ENCODE measurements at regions of chr14 and their contacts with region 1.

Region 1: DNA sequence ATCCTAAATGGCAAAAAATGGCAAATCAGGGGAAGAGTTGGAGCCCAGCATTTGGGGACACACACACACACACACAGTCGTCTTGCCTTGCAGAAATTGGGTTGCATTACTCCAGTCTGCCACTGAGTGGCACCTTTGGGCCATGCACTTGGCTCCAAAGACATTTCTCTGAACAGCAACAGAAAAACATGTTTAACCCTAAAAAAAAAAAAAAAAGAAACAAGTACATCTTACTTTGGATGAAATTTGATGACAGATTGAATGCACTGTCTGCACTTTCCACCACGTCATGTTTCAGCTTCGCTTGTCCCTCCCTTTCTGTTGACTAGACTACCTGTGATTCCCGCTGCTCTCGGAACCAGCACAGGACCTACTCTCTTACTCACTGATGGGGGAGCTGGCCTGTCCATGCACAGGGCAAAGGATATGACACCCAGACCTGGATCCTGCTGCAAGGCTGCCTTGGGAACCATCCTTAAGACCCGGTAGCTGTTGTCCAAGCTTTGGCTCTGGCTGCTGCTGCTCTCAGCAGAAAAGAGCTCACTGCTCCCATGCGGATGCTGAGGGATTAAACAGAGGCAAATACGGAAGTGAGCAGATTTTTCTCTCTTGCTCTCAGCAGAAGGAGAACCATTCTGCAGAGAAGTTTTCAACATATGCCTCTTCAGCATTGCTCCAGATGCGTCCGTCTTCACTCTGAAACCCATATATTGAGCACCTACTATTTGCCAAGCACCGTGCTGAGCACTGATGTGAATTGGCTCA is 376.8 kb downstream of the DPF3 start:
- DNase-seq: peak in 1 of 2 experiments; percentile 49
- H3K4me3 ChIP-seq: no peak overlapping the region
- H3K27ac ChIP-seq: no peak overlapping the region
- H3K4me1 ChIP-seq: no peaks in the 10 kb centered on the region
- H3K27me3 ChIP-seq: peaks cover 28% of the 10 kb centered on the region
- CTCF ChIP-seq: peak; percentile 80

Region 2: GRCh38 chr14:72554994-72555604 is 38.0 kb after region 1 on chr14:
- CTCF ChIA-PET with region 1: no interaction called
- POLR2A ChIA-PET with region 1: no interaction called
- intact Hi-C with region 1: no loop called
- DNase-seq: no peak
- H3K4me3 ChIP-seq: no peak overlapping the region
- H3K27ac ChIP-seq: no peak overlapping the region
- H3K4me1 ChIP-seq: no peaks in the 10 kb centered on the region
- H3K27me3 ChIP-seq: peaks cover 93% of the 10 kb centered on the region
- CTCF ChIP-seq: no peak

Region 3: GRCh38 chr14:72904840-72905561 is 387.9 kb after region 1 on chr14:
- CTCF ChIA-PET with region 1: interaction called, 4 read pairs
- POLR2A ChIA-PET with region 1: no interaction called
- intact Hi-C with region 1: loop called (anchors 1 kb)
- DNase-seq: peak; percentile 42 to 58
- H3K4me3 ChIP-seq: no peak overlapping the region
- H3K27ac ChIP-seq: no peak overlapping the region
- H3K4me1 ChIP-seq: no peaks in the 10 kb centered on the region
- H3K27me3 ChIP-seq: peaks cover 10% of the 10 kb centered on the region
- CTCF ChIP-seq: peak; percentile 96

Region 4: DNA sequence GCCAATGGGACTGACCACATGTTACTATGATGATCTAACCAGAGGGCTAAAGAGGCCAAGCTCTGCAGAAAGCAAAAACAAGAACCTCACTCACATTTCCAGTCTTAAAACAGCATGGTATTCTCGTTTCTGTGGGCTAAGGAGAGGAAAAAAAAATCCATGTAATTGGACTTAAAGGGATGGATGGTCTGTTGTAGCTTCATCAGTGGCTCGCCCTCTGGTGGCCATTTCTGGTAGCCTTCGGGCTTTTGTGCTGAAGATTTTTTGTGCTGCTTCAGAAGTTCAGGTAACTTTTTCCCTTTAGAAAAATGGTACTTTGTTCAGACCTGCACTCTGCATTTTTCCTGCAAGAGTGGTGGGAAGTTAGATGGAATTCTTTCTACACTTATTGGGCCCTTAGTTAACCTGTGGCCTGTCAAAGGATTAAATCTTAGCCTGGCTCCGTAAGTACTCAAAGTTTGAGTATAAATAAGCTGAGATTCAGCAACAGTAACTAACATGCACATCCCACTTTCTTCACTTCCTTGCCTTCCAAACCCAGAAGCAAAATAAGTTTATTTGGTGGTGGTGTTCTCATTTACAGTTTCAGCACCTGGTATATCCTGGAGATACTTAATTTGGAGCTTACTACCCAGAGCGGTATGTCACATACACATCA is 431.5 kb after region 1 on chr14:
- CTCF ChIA-PET with region 1: no interaction called
- POLR2A ChIA-PET with region 1: no interaction called
- intact Hi-C with region 1: loop called (anchors 1 kb)
- DNase-seq: peak in 1 of 2 experiments; percentile 62
- H3K4me3 ChIP-seq: no peak overlapping the region
- H3K27ac ChIP-seq: no peak overlapping the region
- H3K4me1 ChIP-seq: no peaks in the 10 kb centered on the region
- H3K27me3 ChIP-seq: no peaks in the 10 kb centered on the region
- CTCF ChIP-seq: peak; percentile 87

Region 5: GRCh38 chr14:73713803-73714655 is 1196.9 kb after region 1 on chr14 and contains the start of gene PNMA1:
- CTCF ChIA-PET with region 1: no interaction called
- POLR2A ChIA-PET with region 1: no interaction called
- intact Hi-C with region 1: loop called (anchors 10 kb)
- DNase-seq: peak; percentile 50 to 85
- H3K4me3 ChIP-seq: peak within 1 kb of the TSS; percentile 94
- H3K27ac ChIP-seq: peak within 1 kb of the TSS; percentile 46; the same call in 1 of the 2 replicates
- H3K4me1 ChIP-seq: peaks cover 31% of the 10 kb centered on the region
- H3K27me3 ChIP-seq: no peaks in the 10 kb centered on the region
- CTCF ChIP-seq: no peak
- total RNA-seq, gene PNMA1: 13.6 and 16.8 TPM in 2 replicates